ENCODE measurements at regions of chr17 and their contacts with region 1.

Region 1: GRCh38 chr17:40139566-40140058 is 725 bp upstream of the CASC3 start:
- DNase-seq: no peak
- H3K4me3 ChIP-seq: peak overlapping the region; percentile 51 to 88 (median 68)
- H3K27ac ChIP-seq: peak overlapping the region; percentile 84
- H3K4me1 ChIP-seq: peaks cover 0 to 4% (median 1%) of the 10 kb centered on the region in 4 experiments; a peak in 2 of 7 replicates
- H3K27me3 ChIP-seq: no peaks in the 10 kb centered on the region
- CTCF ChIP-seq: no peak
- EP300 ChIP-seq: no peak
- POLR2A ChIP-seq: no peak
- RAD21 ChIP-seq: no peak

Region 2: DNA sequence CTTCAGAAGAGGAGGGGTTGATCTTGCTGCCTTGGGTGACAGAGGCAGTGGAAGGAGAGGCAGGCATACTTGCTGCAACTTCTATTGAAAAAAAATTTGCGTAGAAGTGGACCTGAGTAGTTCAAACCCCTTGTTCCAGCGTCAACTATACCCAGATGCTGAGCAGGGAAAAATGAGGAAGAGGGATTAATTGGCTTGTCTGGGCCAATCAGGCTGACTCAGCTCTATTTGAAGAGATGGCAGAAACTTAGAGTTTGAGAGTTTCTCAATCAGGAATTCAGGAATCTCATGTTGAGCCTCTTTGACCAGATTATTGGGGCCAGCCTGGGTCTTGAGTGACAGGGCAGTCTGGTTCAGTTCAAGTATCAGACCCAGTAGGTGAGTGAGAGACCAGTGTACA is 18.4 kb after region 1 on chr17:
- CTCF ChIA-PET with region 1: interaction called, 5 read pairs
- POLR2A ChIA-PET with region 1: interaction called, 41 read pairs
- DNase-seq: no peak
- H3K4me3 ChIP-seq: no peak overlapping the region
- H3K27ac ChIP-seq: no peak overlapping the region
- H3K4me1 ChIP-seq: no peaks in the 10 kb centered on the region
- H3K27me3 ChIP-seq: no peaks in the 10 kb centered on the region
- CTCF ChIP-seq: no peak
- EP300 ChIP-seq: no peak
- POLR2A ChIP-seq: no peak
- RAD21 ChIP-seq: no peak

Measured in H1 (cell line).